ENCODE measurements at regions of chr12 and their contacts with region 1.

Region 1: GRCh38 chr12:1916371-1917171 is 1.9 kb downstream of the CACNA2D4 start:
- DNase-seq: peak; percentile 10 to 52 (median 47)
- ATAC-seq: peak in 1 of 4 donors; percentile 20
- H3K4me3 ChIP-seq: no peak overlapping the region
- H3K27ac ChIP-seq: no peak overlapping the region
- H3K4me1 ChIP-seq: no peaks in the 10 kb centered on the region
- H3K27me3 ChIP-seq: no peaks in the 10 kb centered on the region
- CTCF ChIP-seq: no peak
- POLR2A ChIP-seq: no peak

Region 2: GRCh38 chr12:1820191-1820895 is 96.2 kb before region 1 on chr12 and contains the start of gene LRTM2:
- intact Hi-C with region 1: loop called in 1 of 2 experiments (anchors 10 kb)
- DNase-seq: no peak
- ATAC-seq: no peak
- H3K4me3 ChIP-seq: no peak within 1 kb of the TSS
- H3K27ac ChIP-seq: no peak within 1 kb of the TSS
- H3K4me1 ChIP-seq: no peaks in the 10 kb centered on the region
- H3K27me3 ChIP-seq: no peaks in the 10 kb centered on the region
- CTCF ChIP-seq: no peak
- POLR2A ChIP-seq: no peak
- total RNA-seq, gene LRTM2: not detected